OCI-LY7 (cell line): ENCODE measurements at regions of chr4 and their contacts with region 1.

Region 1: GRCh38 chr4:113547487-113548042 is 214.0 kb downstream of the CAMK2D start:
- DNase-seq: peak; percentile 95
- H3K4me3 ChIP-seq: no peak overlapping the region
- H3K27ac ChIP-seq: peak overlapping the region; percentile 60
- H3K4me1 ChIP-seq: peaks cover 25% of the 10 kb centered on the region
- CTCF ChIP-seq: peak; percentile 97

Region 2: DNA sequence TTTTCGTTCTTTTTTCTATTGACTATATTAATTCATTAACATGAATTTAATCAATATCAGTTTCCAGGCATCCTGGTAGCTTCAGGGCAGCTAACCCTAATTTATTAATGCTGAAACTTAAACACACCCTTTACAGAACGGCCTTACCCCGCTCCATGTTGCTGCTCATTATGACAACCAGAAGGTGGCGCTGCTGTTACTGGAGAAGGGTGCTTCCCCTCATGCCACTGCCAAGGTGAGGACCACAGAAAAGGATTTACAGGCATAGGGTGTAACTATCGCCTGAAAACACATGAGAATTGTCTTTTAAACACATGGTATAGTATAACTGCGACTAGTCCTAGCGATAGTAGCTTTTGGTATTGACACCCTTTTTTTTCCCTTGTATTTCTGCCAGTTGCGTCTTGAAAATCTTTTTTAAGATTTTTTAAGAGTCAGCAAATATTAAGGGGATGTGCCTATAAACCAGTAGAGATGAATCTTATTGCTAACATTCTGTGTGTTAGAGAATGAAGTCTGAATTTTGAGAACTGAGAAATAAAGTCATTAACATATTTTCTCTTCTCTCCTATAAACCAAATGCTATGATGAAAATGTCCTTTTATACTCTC is 269.1 kb before region 1 on chr4:
- CTCF ChIA-PET with region 1: no interaction called
- POLR2A ChIA-PET with region 1: no interaction called
- intact Hi-C with region 1: no loop called
- DNase-seq: peak; percentile 67
- H3K4me3 ChIP-seq: no peak overlapping the region
- H3K27ac ChIP-seq: no peak overlapping the region
- H3K4me1 ChIP-seq: no peaks in the 10 kb centered on the region
- CTCF ChIP-seq: peak; percentile 94

Region 3: DNA sequence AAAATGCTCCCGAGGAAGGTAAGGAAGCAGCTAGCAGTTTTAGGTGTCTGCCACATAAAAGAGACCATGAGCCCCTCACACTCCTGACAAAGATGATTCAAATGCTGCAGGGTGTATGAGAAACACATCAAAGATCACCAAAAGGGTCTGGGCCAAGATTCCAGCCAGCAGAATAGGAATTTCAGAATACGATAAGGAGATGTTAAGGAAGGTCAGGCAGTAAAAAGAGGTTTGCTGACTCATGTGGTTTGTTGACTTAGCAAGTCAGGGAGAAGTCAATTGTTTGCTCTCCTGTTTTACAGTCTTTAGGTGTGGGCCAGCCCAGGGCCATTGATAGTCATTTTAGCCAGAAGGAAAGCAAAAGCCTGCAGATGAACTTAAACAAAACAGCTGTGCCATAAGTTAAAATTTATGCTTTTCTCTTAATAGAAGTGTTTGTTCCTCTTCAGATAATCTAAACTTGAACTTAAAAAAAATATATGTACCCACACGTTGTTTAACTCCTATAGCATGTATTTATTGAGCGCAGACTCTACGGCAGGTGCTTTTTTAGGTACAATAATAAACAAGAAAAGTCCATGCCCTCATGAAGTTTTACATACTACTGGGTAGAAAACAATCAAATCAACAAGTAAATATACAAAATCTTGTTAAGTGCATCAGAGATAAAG is 98.3 kb after region 1 on chr4:
- CTCF ChIA-PET with region 1: no interaction called
- POLR2A ChIA-PET with region 1: interaction called, 10 read pairs
- intact Hi-C with region 1: loop called (anchors 1 kb)
- DNase-seq: no peak
- H3K4me3 ChIP-seq: no peak overlapping the region
- H3K27ac ChIP-seq: no peak overlapping the region
- H3K4me1 ChIP-seq: peaks cover 39% of the 10 kb centered on the region
- CTCF ChIP-seq: no peak

Region 4: GRCh38 chr4:113684534-113685091 is 137.0 kb after region 1 on chr4:
- CTCF ChIA-PET with region 1: no interaction called
- POLR2A ChIA-PET with region 1: no interaction called
- intact Hi-C with region 1: loop called (anchors 5 kb)
- DNase-seq: peak; percentile 34
- H3K4me3 ChIP-seq: no peak overlapping the region
- H3K27ac ChIP-seq: peak overlapping the region; percentile 89
- H3K4me1 ChIP-seq: peaks cover 52% of the 10 kb centered on the region
- CTCF ChIP-seq: peak; percentile 47; the same call in 1 of the 2 replicates

Region 5: DNA sequence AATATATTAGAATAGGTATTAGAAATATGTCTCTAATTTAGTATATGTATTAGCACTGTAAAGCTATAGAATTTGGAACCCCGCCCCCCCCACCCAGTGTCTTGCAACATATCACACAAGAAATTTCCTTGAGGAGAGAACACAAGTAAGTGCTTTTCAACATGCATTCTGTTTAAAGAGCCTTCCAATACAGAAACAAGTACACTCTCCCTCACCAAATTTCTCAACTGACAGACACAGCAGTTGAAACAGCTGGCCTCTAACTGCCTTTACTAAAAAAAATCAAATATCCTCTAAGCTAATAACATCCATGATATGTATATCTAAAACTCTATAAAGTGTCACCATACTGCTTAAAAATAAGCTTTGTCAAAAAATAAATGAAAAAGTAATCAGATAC is 201.6 kb after region 1 on chr4:
- CTCF ChIA-PET with region 1: no interaction called
- POLR2A ChIA-PET with region 1: no interaction called
- intact Hi-C with region 1: no loop called
- DNase-seq: no peak
- H3K4me3 ChIP-seq: no peak overlapping the region
- H3K27ac ChIP-seq: no peak overlapping the region
- H3K4me1 ChIP-seq: peaks cover 7% of the 10 kb centered on the region
- CTCF ChIP-seq: no peak

Region 6: DNA sequence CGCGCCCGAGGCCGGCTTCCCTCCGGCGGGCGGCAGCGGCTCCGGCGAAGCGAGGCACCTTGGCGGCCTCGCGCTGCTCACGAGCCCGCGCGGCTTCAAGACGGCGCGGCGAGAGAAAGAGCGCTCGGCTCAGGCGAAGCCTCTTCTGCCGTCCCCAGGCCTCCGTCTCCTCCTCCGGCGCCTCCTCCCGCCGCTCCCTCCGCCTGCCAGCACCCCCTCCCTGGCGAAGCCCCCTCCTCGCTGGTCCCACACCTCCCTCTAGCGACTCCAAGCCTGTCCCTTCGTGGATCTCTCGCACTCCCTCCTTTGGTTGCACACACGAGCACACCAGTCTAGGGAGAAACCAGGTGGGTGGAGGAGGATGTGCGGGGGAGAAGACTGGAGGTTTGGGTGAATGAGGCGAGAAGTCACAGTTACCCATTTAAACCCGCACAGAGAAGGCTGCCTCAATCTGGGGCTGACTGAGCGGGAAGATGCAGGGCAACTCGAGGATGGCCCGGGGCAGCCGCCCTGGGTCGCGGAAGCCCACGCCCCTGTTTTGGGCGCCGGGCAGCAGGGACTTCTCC is 214.1 kb after region 1 on chr4 and contains the start of gene CAMK2D:
- CTCF ChIA-PET with region 1: interaction called, 8 read pairs
- POLR2A ChIA-PET with region 1: interaction called, 3 read pairs
- intact Hi-C with region 1: loop called (anchors 1 kb)
- DNase-seq: peak; percentile 91
- H3K4me3 ChIP-seq: peak within 1 kb of the TSS; percentile 89
- H3K27ac ChIP-seq: peak within 1 kb of the TSS; percentile 99
- H3K4me1 ChIP-seq: peaks cover 27% of the 10 kb centered on the region
- CTCF ChIP-seq: peak; percentile 76
- total RNA-seq, gene CAMK2D: 109 and 120 TPM in 2 replicates

Region 7: DNA sequence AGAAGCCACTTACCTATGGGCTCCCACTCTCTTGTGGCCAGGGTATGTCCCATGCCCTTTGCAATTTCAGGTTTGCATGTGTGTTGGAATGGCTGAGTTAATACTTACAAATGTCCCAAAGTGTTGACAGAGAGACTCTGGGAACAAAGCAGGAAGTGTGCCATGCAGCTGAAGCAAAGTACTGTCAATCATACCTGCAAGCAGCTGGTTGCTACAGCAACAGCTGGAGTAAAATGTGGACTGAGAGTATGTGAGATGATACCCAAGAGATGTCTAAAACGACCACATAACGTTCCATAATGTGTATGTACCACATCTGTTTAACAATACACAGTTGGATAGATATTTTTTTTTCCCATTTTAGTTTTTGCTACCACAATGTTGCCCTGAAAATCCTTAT is 296.8 kb after region 1 on chr4:
- CTCF ChIA-PET with region 1: no interaction called
- POLR2A ChIA-PET with region 1: no interaction called
- intact Hi-C with region 1: loop called (anchors 5 kb)
- DNase-seq: peak; percentile 10
- H3K4me3 ChIP-seq: no peak overlapping the region
- H3K27ac ChIP-seq: no peak overlapping the region
- H3K4me1 ChIP-seq: no peaks in the 10 kb centered on the region
- CTCF ChIP-seq: no peak

Region 8: GRCh38 chr4:113908829-113909228 is 361.3 kb after region 1 on chr4:
- CTCF ChIA-PET with region 1: no interaction called
- POLR2A ChIA-PET with region 1: no interaction called
- intact Hi-C with region 1: loop called (anchors 5 kb)
- DNase-seq: peak; percentile 20
- H3K4me3 ChIP-seq: no peak overlapping the region
- H3K27ac ChIP-seq: no peak overlapping the region
- H3K4me1 ChIP-seq: no peaks in the 10 kb centered on the region
- CTCF ChIP-seq: peak; percentile 74